Cardiac septum (tissue), 1 donor: ENCODE measurements at regions of chr11 and their contacts with region 1.

Region 1: GRCh38 chr11:1837171-1838076 is 1.4 kb upstream of the TNNI2 start:
- DNase-seq: no peak

Region 2: DNA sequence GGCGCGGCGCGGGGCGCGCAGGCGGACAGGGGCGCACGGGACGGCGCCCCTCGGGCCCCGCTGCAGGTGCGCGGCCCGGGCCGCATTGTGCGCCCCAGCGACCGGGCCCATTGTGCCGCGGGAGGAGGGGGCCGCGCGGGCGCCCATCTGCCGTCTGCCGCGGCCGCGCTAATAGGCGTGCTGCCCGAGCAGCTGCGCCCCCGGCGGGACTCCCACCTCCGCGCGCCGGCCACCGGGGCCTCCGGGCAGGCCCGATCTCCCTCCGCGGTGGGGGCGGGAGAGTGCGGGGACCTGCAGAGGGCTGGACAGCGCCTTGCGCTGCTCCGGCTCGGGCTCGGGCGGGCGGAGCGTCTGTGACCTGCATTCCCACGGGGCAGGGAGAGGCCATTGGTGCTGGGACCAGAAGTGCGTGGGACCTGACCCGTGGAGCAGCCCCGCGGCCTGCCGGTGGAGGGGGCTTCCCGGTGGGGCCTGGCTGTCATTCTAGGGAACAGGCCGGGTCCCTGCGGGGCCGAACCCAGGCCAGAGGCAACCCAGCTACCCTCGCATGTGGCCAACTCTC is 446.7 kb before region 1 on chr11:
- intact Hi-C with region 1: no loop called
- DNase-seq: no peak

Region 3: GRCh38 chr11:1917671-1918516 is 80.5 kb after region 1 on chr11:
- intact Hi-C with region 1: loop called (anchors 2 kb)
- DNase-seq: no peak

Region 4: DNA sequence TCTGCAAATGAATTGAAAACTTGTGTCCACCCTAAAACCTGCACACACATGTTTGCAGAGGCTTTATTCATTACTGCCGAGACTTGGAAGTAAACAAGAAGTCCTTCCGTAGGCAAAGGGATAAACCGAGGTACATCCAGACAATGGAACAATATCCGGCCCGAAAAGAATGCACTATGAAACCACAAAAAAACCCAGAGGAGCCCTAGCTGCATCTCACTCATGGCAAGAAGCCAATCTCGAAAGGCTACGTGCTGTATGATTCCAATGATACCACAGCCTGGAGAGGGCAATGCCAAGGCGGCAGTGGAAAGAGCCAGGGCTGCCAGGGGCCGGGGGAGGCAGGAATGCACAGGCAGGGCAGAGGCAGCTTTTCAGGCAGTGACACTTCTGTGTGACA is 106.6 kb after region 1 on chr11:
- intact Hi-C with region 1: loop called (anchors 5 kb)
- DNase-seq: peak; percentile 63